ENCODE measurements at regions of chrX and their contacts with region 1.

Region 1: DNA sequence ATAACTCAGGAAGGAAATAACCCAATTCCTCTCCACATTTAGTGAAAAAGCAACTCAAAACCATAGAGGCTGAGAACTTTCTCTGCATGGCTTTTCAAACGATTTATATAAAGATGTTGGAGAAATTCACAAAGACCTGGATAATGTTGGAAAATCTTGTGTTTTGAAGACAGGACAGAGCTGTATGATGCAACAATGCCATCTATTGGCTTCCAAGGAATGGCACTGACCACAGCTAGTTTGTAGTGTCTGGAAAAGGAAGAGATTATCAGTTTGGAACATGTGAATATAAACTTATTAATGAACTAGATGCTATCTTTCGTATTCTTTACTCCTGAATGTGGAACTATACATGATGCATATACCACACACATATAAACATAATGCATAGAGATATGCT is 503.6 kb downstream of the IL1RAPL1 start:
- DNase-seq: no peak
- H3K4me3 ChIP-seq: no peak overlapping the region
- H3K27ac ChIP-seq: no peak overlapping the region
- H3K4me1 ChIP-seq: no peaks in the 10 kb centered on the region
- H3K27me3 ChIP-seq: no peaks in the 10 kb centered on the region
- CTCF ChIP-seq: peak in 1 of 4 experiments; percentile 26
- EP300 ChIP-seq: no peak
- POLR2A ChIP-seq: no peak

Region 2: GRCh38 chrX:28586981-28587551 is 503.7 kb before region 1 on chrX and contains the start of gene IL1RAPL1:
- intact Hi-C with region 1: loop called (anchors 5 kb)
- DNase-seq: no peak
- H3K4me3 ChIP-seq: peak within 1 kb of the TSS; percentile 28 to 45 (median 40)
- H3K27ac ChIP-seq: peak within 1 kb of the TSS; percentile 50 to 70 (median 64)
- H3K4me1 ChIP-seq: no peaks in the 10 kb centered on the region
- H3K27me3 ChIP-seq: no peaks in the 10 kb centered on the region
- CTCF ChIP-seq: no peak
- EP300 ChIP-seq: no peak
- POLR2A ChIP-seq: no peak
- total RNA-seq, gene IL1RAPL1: 0.81 to 2.5 (median 1.6) TPM

Measured in sigmoid colon (tissue), 7 donors.